ENCODE measurements at regions of chr15 and their contacts with region 1.

Region 1: GRCh38 chr15:33766389-33766788 is 201.9 kb upstream of the CHRM5 start:
- DNase-seq: no peak
- H3K4me3 ChIP-seq: no peak overlapping the region
- H3K27ac ChIP-seq: no peak overlapping the region
- H3K4me1 ChIP-seq: no peaks in the 10 kb centered on the region
- H3K27me3 ChIP-seq: no peaks in the 10 kb centered on the region
- CTCF ChIP-seq: no peak
- EP300 ChIP-seq: no peak
- POLR2A ChIP-seq: no peak

Region 2: DNA sequence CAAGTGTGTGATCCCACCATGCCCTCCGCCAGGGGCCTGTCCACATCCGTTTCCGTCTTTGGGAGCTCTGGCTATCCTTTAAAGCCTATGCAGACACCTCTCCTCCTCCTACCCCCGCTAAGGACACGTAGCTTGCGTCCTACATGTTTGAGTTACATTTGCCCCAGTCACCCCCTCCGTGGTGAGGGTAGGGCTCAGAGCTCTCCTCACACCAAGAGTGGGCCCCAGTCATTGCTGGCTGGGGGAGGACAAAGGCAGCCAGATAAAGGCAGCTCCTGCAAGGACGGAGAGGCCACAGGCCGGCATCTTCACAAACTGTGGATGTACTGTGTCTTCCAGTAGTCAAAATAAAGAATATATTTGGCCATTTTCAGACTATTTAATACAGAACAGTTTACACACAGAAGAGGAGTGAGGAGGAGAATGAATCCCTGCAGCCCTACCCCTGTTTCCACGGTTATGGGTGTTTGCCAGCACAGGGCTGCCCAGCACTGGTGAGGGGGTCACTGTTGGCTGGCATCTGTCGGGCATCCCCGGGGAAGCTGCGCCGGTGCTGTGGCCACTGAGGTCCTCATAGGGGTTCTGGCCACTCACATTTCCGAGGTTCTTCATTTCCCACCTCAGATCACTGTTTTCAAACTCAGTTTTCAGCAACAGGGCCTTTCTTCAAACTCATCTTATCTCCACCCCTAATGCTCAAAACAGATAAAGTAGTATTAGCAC is 1617.4 kb before region 1 on chr15:
- in situ Hi-C with region 1: no loop called
- intact Hi-C with region 1: loop called (anchors 10 kb)
- DNase-seq: no peak
- H3K4me3 ChIP-seq: no peak overlapping the region
- H3K27ac ChIP-seq: no peak overlapping the region
- H3K4me1 ChIP-seq: no peaks in the 10 kb centered on the region
- H3K27me3 ChIP-seq: no peaks in the 10 kb centered on the region
- CTCF ChIP-seq: no peak
- EP300 ChIP-seq: no peak
- POLR2A ChIP-seq: no peak

Region 3: GRCh38 chr15:33031324-33031821 is 735.0 kb before region 1 on chr15:
- in situ Hi-C with region 1: no loop called
- intact Hi-C with region 1: no loop called
- DNase-seq: no peak
- H3K4me3 ChIP-seq: no peak overlapping the region
- H3K27ac ChIP-seq: no peak overlapping the region
- H3K4me1 ChIP-seq: peaks cover 0 to 59% (median 34%) of the 10 kb centered on the region in 4 donors
- H3K27me3 ChIP-seq: no peaks in the 10 kb centered on the region
- CTCF ChIP-seq: no peak
- EP300 ChIP-seq: no peak
- POLR2A ChIP-seq: no peak